ENCODE measurements at regions of chr2 and their contacts with region 1.

Region 1: DNA sequence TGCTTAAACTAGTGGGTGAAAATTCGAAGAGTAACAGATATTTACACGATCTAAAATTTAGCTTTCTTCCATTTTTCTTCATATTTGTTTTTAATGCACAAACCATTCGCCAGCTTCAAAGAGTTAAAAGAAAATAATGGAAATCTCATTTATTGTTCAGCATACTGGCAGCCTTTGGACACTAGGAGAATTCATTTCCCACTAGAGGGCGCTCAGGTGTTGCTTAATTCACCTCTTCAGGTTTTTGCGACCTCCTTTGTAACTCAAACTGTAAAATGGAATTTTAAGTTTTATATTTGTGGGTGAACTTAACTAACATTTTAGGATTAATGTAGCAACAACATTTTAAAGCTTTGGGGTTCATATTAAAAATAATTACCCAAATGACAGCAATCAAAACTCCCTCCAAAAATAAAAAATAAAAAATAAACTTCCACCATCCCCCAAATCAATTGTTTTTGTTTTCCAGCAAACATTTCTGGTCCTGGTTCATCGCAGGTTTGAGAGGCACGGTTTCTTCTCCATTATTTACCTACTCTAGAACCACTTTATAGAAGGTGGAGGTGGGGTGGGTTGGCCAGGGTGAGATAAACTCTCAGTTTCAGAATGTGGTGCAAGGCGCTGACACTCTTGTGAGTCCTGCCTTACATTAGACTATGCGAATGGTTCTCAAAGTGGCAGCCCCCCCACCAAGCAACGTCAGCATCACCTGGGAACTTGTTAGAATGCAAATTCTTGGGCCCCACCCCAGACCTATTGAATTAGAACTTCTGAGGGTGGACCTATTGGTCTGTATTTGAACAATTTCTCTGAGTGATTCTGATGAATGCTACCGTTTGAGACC is 24.7 kb upstream of the PNPT1 start:
- DNase-seq: peak; percentile 84
- H3K4me3 Mint-ChIP-seq: no peak overlapping the region
- H3K27ac Mint-ChIP-seq: no peak overlapping the region
- H3K4me1 Mint-ChIP-seq: no peaks in the 10 kb centered on the region
- H3K27me3 Mint-ChIP-seq: peaks cover 6% of the 10 kb centered on the region

Region 2: DNA sequence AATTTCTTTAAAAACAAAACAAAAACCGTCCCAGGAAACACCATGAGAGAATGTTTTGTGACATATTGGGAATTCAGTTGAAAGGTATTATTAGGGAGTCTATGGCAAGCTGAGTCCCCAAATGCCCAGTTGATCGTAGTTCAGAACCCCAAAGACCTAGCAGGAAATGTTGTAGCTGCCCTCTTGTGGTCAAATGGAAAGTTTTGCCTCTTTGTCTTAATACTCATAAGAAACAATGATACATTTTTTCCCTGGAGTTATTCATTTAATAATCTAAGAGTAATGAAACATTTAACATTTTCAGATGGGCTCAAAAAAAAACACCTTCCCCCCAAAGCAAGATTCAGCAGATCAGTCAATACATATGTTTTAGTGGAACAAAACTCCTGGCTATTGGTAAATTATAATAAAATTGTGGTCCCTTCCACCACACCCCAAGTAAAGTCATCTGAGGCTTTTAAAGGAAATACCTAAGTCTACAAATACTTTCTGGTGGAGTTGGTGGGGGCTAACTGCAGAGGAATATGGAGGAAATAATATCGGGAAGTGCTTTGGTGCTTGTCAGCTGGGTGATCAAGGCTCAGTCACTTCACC is 243.0 kb after region 1 on chr2:
- intact Hi-C with region 1: loop called (anchors 1 kb)
- DNase-seq: no peak
- H3K4me3 Mint-ChIP-seq: no peak overlapping the region
- H3K27ac Mint-ChIP-seq: no peak overlapping the region
- H3K4me1 Mint-ChIP-seq: no peaks in the 10 kb centered on the region
- H3K27me3 Mint-ChIP-seq: no peaks in the 10 kb centered on the region

Region 3: DNA sequence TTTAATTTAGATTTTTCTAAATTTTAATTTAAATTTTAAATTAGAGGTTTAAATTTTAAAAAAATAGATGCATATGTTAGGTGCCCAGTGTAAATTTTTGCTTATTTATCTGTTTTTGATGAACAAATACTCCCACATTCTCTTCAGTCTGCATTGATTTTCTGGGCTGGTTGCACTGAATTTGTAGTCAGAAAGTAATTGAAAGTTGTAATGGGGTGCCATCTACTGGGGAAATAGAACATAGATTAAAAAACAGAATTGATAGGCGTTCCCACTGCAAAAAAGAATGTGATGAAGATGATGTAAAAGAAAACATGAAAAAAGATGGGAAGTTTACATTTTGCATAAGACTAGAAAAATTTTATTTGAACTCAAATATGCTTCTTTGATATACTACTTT is 413.8 kb after region 1 on chr2:
- intact Hi-C with region 1: loop called (anchors 2 kb)
- DNase-seq: no peak
- H3K4me3 Mint-ChIP-seq: no peak overlapping the region
- H3K27ac Mint-ChIP-seq: no peak overlapping the region
- H3K4me1 Mint-ChIP-seq: no peaks in the 10 kb centered on the region
- H3K27me3 Mint-ChIP-seq: no peaks in the 10 kb centered on the region

Region 4: DNA sequence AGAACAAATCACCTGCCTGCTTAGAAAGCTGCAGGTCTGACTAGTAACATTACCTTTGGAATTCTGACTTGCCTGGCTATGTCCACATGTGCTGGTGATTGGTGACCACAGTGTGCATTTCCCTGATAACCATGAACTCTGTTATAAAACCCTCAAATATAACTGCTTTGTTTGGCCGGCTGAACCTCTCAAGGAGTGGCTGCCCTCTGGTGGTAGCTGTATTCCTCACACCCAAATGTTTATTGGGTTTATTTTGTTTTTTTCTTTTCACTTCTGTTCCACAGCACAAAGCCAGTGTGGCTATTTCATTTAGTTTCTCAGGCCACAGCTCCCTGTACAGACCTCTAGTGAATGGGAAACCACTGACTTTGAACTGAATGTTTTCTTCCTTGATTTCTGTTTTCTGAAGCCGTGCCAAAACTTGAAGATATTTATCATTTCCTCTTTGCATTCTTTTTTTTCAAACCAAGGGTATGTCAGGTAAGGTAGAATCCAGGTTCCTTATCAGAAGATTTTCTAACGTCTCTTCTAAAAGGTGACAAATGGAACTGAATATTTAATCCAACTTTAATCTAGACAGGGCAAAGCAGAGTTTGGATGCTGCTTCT is 1779.2 kb after region 1 on chr2:
- intact Hi-C with region 1: loop called (anchors 10 kb)
- DNase-seq: peak; percentile 66
- H3K4me3 Mint-ChIP-seq: no peak overlapping the region
- H3K27ac Mint-ChIP-seq: no peak overlapping the region
- H3K4me1 Mint-ChIP-seq: no peaks in the 10 kb centered on the region
- H3K27me3 Mint-ChIP-seq: no peaks in the 10 kb centered on the region

Region 5: DNA sequence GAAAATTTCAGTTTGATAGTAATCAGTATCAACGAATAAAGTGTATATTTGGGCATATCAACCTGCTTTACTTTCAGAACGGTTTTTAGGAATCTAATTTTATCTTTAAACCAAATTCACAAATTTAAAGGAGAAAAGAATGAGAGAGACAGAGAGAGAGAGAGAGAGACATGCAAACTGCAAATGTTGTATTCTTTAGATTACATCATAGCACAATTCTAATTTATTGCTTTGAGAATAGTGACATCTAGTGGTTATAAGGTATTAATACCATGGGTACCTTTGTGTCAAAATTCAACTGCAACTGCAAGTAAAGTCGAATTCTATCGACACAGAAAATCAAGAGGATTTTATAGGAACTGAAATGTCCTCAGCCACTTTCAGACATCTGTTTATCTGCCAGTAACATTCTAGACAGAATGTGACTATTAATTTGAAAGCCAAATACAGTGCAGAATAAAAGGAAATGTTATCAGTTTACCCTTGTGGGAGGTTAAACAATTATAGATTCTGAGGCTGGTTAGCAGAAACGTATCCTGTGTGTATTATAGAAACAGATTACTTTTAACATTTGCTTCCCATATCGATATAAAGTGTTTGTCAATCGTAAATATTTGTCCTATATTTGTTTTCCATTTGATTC is 1798.4 kb after region 1 on chr2:
- intact Hi-C with region 1: loop called (anchors 5 kb)
- DNase-seq: no peak
- H3K4me3 Mint-ChIP-seq: no peak overlapping the region
- H3K27ac Mint-ChIP-seq: no peak overlapping the region
- H3K4me1 Mint-ChIP-seq: no peaks in the 10 kb centered on the region
- H3K27me3 Mint-ChIP-seq: no peaks in the 10 kb centered on the region

Measured in activated CD4-positive, alpha-beta T cell treated with anti-CD3 and anti-CD28 coated beads, Interleukin-2, amount 10 ng/mL, durations not matched to agents 24 days and 14 days (primary cell).